ENCODE measurements at regions of chr7 and their contacts with region 1.

Region 1: GRCh38 chr7:137656227-137656849 is 190.4 kb downstream of the DGKI start:
- DNase-seq: peak; percentile 76

Region 2: GRCh38 chr7:137898839-137899721 is 242.7 kb after region 1 on chr7:
- in situ Hi-C with region 1: loop called (anchors 25 kb)
- DNase-seq: peak; percentile 90

Region 3: GRCh38 chr7:138002096-138002827 is 345.9 kb after region 1 on chr7:
- in situ Hi-C with region 1: loop called (anchors 25 kb)
- DNase-seq: peak; percentile 100